Activated CD4-positive, alpha-beta memory T cell treated with anti-CD3 and anti-CD28 coated beads for 36 hours (primary cell): ENCODE measurements at regions of chr18 and their contacts with region 1.

Region 1: GRCh38 chr18:44725300-44726096 is 44.8 kb downstream of the SETBP1 start:
- DNase-seq: peak; percentile 83
- H3K4me3 Mint-ChIP-seq: peak overlapping the region; percentile 27
- H3K27ac Mint-ChIP-seq: peak overlapping the region; percentile 81
- H3K4me1 Mint-ChIP-seq: peaks cover 78% of the 10 kb centered on the region
- H3K27me3 Mint-ChIP-seq: no peaks in the 10 kb centered on the region

Region 2: GRCh38 chr18:44689736-44690135 is 35.8 kb before region 1 on chr18:
- CTCF ChIA-PET with region 1: no interaction called
- POLR2A ChIA-PET with region 1: no interaction called
- intact Hi-C with region 1: no loop called
- DNase-seq: no peak
- H3K4me3 Mint-ChIP-seq: no peak overlapping the region
- H3K27ac Mint-ChIP-seq: no peak overlapping the region
- H3K4me1 Mint-ChIP-seq: peaks cover 8% of the 10 kb centered on the region
- H3K27me3 Mint-ChIP-seq: peaks cover 33% of the 10 kb centered on the region

Region 3: GRCh38 chr18:44758861-44759631 is 33.5 kb after region 1 on chr18:
- CTCF ChIA-PET with region 1: interaction called, 9 read pairs
- POLR2A ChIA-PET with region 1: interaction called, 45 read pairs
- intact Hi-C with region 1: loop called (anchors 1 kb)
- DNase-seq: peak; percentile 78
- H3K4me3 Mint-ChIP-seq: peak overlapping the region; percentile 27
- H3K27ac Mint-ChIP-seq: peak overlapping the region; percentile 87
- H3K4me1 Mint-ChIP-seq: peaks cover 26% of the 10 kb centered on the region
- H3K27me3 Mint-ChIP-seq: peaks cover 3% of the 10 kb centered on the region

Region 4: GRCh38 chr18:44823782-44824181 is 98.3 kb after region 1 on chr18:
- CTCF ChIA-PET with region 1: no interaction called
- POLR2A ChIA-PET with region 1: interaction called, 6 read pairs
- intact Hi-C with region 1: loop called (anchors 2 kb)
- DNase-seq: peak; percentile 28
- H3K4me3 Mint-ChIP-seq: no peak overlapping the region
- H3K27ac Mint-ChIP-seq: no peak overlapping the region
- H3K4me1 Mint-ChIP-seq: peaks cover 16% of the 10 kb centered on the region
- H3K27me3 Mint-ChIP-seq: peaks cover 20% of the 10 kb centered on the region

Region 5: DNA sequence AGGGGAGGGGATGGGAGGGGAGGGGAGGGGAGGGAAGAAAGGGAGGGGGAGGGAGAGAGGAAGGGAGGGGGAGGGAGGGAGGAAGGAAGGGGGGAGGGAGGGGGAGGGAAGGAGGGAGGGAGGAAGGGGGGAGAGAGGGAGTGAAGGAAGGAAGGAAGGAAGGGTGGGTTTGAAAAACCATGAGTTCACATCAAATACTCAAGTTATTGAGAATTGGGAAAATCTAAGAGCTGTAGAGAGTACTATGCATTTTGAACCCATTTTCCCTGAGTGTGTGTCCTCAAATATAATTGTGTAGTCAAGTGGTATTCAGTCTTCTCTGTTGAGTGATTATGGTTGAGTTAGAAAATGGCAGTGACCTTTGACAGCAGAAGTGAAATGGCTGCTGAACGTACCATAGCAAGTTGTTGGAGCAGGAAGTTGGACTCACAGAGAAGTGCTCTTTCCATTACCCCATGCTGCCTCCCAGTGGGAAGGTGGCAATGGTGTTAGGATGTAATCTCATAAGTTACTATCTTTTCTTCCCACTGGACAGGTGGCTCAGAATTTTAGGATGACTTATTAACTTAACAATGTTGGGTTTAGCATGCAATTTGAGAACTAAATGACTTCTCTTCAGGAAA is 169.8 kb after region 1 on chr18:
- CTCF ChIA-PET with region 1: interaction called, 10 read pairs
- POLR2A ChIA-PET with region 1: interaction called, 16 read pairs
- intact Hi-C with region 1: loop called (anchors 1 kb)
- DNase-seq: peak; percentile 62
- H3K4me3 Mint-ChIP-seq: no peak overlapping the region
- H3K27ac Mint-ChIP-seq: no peak overlapping the region
- H3K4me1 Mint-ChIP-seq: peaks cover 43% of the 10 kb centered on the region
- H3K27me3 Mint-ChIP-seq: no peaks in the 10 kb centered on the region

Region 6: GRCh38 chr18:45169610-45170009 is 444.1 kb after region 1 on chr18:
- CTCF ChIA-PET with region 1: no interaction called
- POLR2A ChIA-PET with region 1: no interaction called
- intact Hi-C with region 1: no loop called
- DNase-seq: no peak
- H3K4me3 Mint-ChIP-seq: no peak overlapping the region
- H3K27ac Mint-ChIP-seq: no peak overlapping the region
- H3K4me1 Mint-ChIP-seq: no peaks in the 10 kb centered on the region
- H3K27me3 Mint-ChIP-seq: no peaks in the 10 kb centered on the region